PC-3 (cell line): ENCODE measurements at regions of chr17 and their contacts with region 1.

Region 1: DNA sequence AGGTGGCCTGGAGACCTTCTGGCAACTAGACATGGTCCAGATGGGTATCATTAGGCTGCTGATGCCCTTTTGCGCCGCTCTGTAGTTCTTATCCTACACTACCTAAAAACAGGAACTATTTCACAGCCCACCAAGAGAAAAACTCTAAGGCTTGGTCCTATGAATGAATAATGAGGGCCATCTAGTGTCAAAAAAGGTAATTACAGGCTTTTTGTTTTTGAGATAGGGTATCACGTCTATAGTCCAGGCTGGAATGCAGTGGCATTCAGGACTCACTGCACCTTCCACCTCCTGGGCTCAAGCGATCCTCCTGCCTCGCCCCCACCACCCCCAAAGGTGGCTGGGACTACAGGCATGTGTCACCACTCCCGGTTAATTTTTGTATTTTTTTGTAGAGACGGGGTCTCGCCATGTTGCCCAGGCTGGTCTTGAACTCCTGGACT is 20.9 kb downstream of the COIL start:
- DNase-seq: peak; percentile 93
- ATAC-seq: peak; percentile 73
- H3K4me3 ChIP-seq: no peak overlapping the region
- H3K27ac ChIP-seq: no peak overlapping the region
- H3K4me1 ChIP-seq: peaks cover 16% of the 10 kb centered on the region
- H3K27me3 ChIP-seq: no peaks in the 10 kb centered on the region
- CTCF ChIP-seq: peak; percentile 94

Region 2: GRCh38 chr17:56819431-56820145 is 120.3 kb before region 1 on chr17:
- CTCF ChIA-PET with region 1: interaction called, 8 read pairs
- POLR2A ChIA-PET with region 1: no interaction called
- intact Hi-C with region 1: loop called (anchors 1 kb)
- DNase-seq: peak; percentile 95
- ATAC-seq: peak; percentile 83
- H3K4me3 ChIP-seq: peak overlapping the region; percentile 46; the same call in 1 of the 2 replicates
- H3K27ac ChIP-seq: no peak overlapping the region
- H3K4me1 ChIP-seq: no peaks in the 10 kb centered on the region
- H3K27me3 ChIP-seq: no peaks in the 10 kb centered on the region
- CTCF ChIP-seq: peak; percentile 92

Region 3: GRCh38 chr17:56833809-56834379 is 106.0 kb before region 1 on chr17 and contains the starts of genes C17orf67 and DGKE:
- CTCF ChIA-PET with region 1: no interaction called
- POLR2A ChIA-PET with region 1: no interaction called
- intact Hi-C with region 1: loop called (anchors 1 kb)
- DNase-seq: peak; percentile 98
- ATAC-seq: peak; percentile 79
- H3K4me3 ChIP-seq: peak within 1 kb of the TSS; percentile 74
- H3K27ac ChIP-seq: peak within 1 kb of the TSS; percentile 16
- H3K4me1 ChIP-seq: peaks cover 43% of the 10 kb centered on the region
- H3K27me3 ChIP-seq: no peaks in the 10 kb centered on the region
- CTCF ChIP-seq: no peak
- total RNA-seq, gene C17orf67: 2.3 and 4.4 TPM in 2 replicates
- total RNA-seq, gene DGKE: 8.4 and 12.4 TPM in 2 replicates

Region 4: DNA sequence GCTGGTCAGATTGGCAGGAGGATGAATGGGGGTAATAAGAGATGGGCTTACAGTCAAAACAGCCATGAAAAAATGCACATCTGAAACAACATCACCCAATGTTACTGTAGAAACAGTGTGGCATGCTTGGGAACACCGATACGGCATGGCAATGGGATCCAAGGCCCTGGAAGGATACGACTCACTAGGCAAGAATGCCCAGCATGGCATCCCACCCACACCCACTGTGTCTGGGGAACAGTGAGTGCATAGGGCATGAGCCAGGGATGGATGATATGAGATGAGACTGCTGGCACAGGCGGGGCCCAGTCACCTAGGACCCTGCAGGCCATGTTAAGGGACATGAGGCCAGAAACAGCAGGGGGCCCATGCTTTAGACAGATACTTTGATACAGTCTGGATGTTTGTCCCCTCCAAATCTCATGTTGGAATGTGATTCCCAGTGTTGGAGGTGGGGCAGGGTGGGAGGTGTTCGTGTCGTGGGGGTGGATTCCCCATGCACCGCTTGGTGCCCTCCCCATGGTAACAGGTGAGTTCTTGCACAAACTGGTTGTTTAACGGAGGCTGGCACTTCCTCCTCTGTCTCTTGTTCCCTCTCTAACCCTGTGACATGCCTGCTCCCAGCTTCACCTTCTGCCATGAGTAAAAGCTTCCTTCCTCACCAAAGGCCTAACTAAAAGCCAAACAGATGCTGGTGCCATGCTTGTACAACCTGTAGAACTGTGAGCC is 37.4 kb before region 1 on chr17:
- CTCF ChIA-PET with region 1: no interaction called
- POLR2A ChIA-PET with region 1: no interaction called
- intact Hi-C with region 1: loop called (anchors 5 kb)
- DNase-seq: peak; percentile 94
- ATAC-seq: peak; percentile 93
- H3K4me3 ChIP-seq: no peak overlapping the region
- H3K27ac ChIP-seq: peak overlapping the region; percentile 35
- H3K4me1 ChIP-seq: peaks cover 20% of the 10 kb centered on the region
- H3K27me3 ChIP-seq: no peaks in the 10 kb centered on the region
- CTCF ChIP-seq: no peak

Region 5: GRCh38 chr17:56913864-56914640 is 25.9 kb before region 1 on chr17 and contains the start of gene TRIM25:
- CTCF ChIA-PET with region 1: no interaction called
- POLR2A ChIA-PET with region 1: interaction called, 7 read pairs
- intact Hi-C with region 1: loop called (anchors 1 kb)
- DNase-seq: peak; percentile 92
- ATAC-seq: peak; percentile 67
- H3K4me3 ChIP-seq: peak within 1 kb of the TSS; percentile 87
- H3K27ac ChIP-seq: peak within 1 kb of the TSS; percentile 94
- H3K4me1 ChIP-seq: peaks cover 45% of the 10 kb centered on the region
- H3K27me3 ChIP-seq: no peaks in the 10 kb centered on the region
- CTCF ChIP-seq: no peak
- total RNA-seq, gene TRIM25: 44.0 and 60.2 TPM in 2 replicates

Region 6: GRCh38 chr17:57106107-57106835 is 166.3 kb after region 1 on chr17:
- CTCF ChIA-PET with region 1: no interaction called
- POLR2A ChIA-PET with region 1: interaction called, 13 read pairs
- intact Hi-C with region 1: no loop called
- DNase-seq: peak; percentile 55
- ATAC-seq: peak; percentile 39
- H3K4me3 ChIP-seq: no peak overlapping the region
- H3K27ac ChIP-seq: peak overlapping the region; percentile 97
- H3K4me1 ChIP-seq: peaks cover 39% of the 10 kb centered on the region
- H3K27me3 ChIP-seq: no peaks in the 10 kb centered on the region
- CTCF ChIP-seq: peak; percentile 73